CD4-positive, alpha-beta T cell (primary cell): ENCODE measurements at regions of chr3 and their contacts with region 1.

Region 1: DNA sequence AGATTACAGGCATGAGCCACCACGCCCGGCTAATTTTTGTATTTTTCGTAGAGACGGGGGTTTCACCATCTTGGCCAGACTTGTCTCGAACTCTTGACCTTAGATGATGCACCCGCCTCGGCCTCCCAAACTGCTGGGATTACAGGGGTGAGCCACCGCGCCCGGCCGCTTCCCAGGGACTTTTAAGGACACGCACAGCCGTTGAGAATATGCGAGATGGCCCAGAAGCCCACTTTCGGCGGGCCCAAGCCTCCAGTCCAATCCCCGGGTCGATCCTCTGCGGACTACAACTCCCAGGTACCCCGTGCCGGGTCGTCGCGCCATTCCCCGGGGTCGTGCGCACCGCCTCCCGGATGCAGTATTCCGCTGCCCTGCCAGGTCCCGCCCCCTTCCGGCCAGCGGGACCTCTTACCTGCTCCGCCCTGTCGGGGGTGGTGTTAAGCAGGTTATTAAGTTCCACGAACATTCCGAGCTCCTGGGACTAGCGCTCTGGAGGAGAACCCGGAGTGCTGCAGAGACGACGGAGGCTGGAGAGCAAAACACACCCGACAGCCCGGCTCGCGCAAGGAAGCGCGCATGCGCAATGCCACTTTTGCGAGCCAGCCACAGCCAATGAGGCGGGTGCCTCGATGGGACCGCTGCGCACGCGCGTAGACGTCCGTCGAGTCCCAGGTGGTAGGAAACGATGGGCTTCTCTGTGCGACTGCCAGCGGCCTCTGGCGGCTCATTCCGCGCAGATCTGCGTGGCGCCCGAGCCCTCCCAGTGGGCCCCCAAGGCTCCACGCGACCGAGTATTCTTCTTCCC is at the start of gene ELP6:
- DNase-seq: peak; percentile 92 to 99 (median 97)
- ATAC-seq: peak; percentile 93
- H3K4me3 ChIP-seq: peak within 1 kb of the TSS; percentile 96
- H3K4me3 Mint-ChIP-seq: peak within 1 kb of the TSS; percentile 99
- H3K27ac ChIP-seq: peak within 1 kb of the TSS; percentile 93 to 98
- H3K27ac Mint-ChIP-seq: peak within 1 kb of the TSS; percentile 89
- H3K4me1 ChIP-seq: peaks cover 22% of the 10 kb centered on the region
- H3K4me1 Mint-ChIP-seq: peaks cover 28% of the 10 kb centered on the region
- H3K27me3 ChIP-seq: no peaks in the 10 kb centered on the region
- H3K27me3 Mint-ChIP-seq: no peaks in the 10 kb centered on the region
- CTCF ChIP-seq: peak; percentile 68
- total RNA-seq, gene ELP6: 11.0 to 12.3 TPM

Region 2: GRCh38 chr3:47380601-47381316 is 132.6 kb before region 1 on chr3 and contains the start of gene PTPN23:
- CTCF ChIA-PET with region 1: no interaction called
- POLR2A ChIA-PET with region 1: interaction called, 6 read pairs
- intact Hi-C with region 1: loop called in 1 of 2 experiments (anchors 2 kb)
- DNase-seq: peak; percentile 97 to 99 (median 99)
- ATAC-seq: peak; percentile 84
- H3K4me3 ChIP-seq: peak within 1 kb of the TSS; percentile 97
- H3K4me3 Mint-ChIP-seq: peak within 1 kb of the TSS; percentile 95
- H3K27ac ChIP-seq: peak within 1 kb of the TSS; percentile 85 to 97
- H3K27ac Mint-ChIP-seq: peak within 1 kb of the TSS; percentile 91
- H3K4me1 ChIP-seq: peaks cover 28% of the 10 kb centered on the region
- H3K4me1 Mint-ChIP-seq: peaks cover 41% of the 10 kb centered on the region
- H3K27me3 ChIP-seq: no peaks in the 10 kb centered on the region
- H3K27me3 Mint-ChIP-seq: no peaks in the 10 kb centered on the region
- CTCF ChIP-seq: no peak
- total RNA-seq, gene PTPN23: 27.3 to 35.7 TPM

Region 3: DNA sequence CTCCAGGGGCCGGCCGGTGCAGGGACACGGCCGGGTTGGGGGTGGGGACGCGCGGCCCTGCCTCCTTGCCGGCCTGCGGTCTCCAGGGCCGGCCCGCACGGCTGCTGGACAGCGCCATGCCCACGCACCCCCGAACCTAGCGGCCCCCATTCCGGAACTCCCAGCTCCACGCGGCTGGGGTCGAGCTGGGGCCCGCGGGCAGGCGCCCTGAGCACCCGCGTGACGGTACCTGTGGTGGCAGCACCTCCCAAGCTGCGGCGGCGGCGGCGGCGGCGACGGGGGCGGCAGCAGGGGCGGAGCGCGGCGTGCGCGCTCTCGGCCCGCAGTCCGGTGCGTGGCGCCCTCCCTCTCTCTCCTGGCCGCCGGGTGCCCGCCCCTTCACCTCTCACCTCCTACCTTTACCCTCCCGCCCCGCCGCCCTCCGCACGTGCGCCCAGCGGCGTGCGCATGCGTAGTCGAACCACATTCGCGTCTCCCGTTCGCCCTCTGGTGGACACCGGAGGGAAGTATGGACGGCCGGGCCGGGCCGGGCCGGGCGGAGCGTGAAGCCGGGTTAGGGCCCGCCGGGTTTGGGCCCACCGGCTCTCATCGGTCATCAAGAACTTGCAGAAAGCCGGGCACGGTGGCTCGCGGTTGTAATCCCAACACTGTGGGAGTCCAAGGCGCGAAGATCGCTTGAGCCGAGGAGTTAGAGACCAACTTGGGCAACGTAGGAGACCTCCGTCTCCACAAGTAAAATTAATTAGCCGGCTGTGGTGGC is 37.6 kb before region 1 on chr3 and contains the start of gene SCAP:
- CTCF ChIA-PET with region 1: interaction called, 5 read pairs
- POLR2A ChIA-PET with region 1: interaction called, 3 read pairs
- intact Hi-C with region 1: loop called (anchors 1 to 5 kb)
- DNase-seq: peak; percentile 93 to 98 (median 96)
- ATAC-seq: peak; percentile 92
- H3K4me3 ChIP-seq: peak within 1 kb of the TSS; percentile 68
- H3K4me3 Mint-ChIP-seq: peak within 1 kb of the TSS; percentile 99
- H3K27ac ChIP-seq: peak within 1 kb of the TSS; percentile 73 to 74
- H3K27ac Mint-ChIP-seq: peak within 1 kb of the TSS; percentile 89
- H3K4me1 ChIP-seq: peaks cover 28% of the 10 kb centered on the region
- H3K4me1 Mint-ChIP-seq: peaks cover 44% of the 10 kb centered on the region
- H3K27me3 ChIP-seq: no peaks in the 10 kb centered on the region
- H3K27me3 Mint-ChIP-seq: no peaks in the 10 kb centered on the region
- CTCF ChIP-seq: peak; percentile 90
- total RNA-seq, gene SCAP: 58.3 to 60.3 TPM

Region 4: GRCh38 chr3:48088749-48089466 is 575.6 kb after region 1 on chr3:
- CTCF ChIA-PET with region 1: no interaction called
- POLR2A ChIA-PET with region 1: no interaction called
- intact Hi-C with region 1: loop called in 1 of 2 experiments (anchors 10 kb)
- DNase-seq: peak; percentile 83 to 97 (median 93)
- ATAC-seq: peak; percentile 90
- H3K4me3 ChIP-seq: peak overlapping the region; percentile 82
- H3K4me3 Mint-ChIP-seq: peak overlapping the region; percentile 97
- H3K27ac ChIP-seq: peak overlapping the region; percentile 80 to 81
- H3K27ac Mint-ChIP-seq: peak overlapping the region; percentile 95
- H3K4me1 ChIP-seq: peaks cover 19% of the 10 kb centered on the region
- H3K4me1 Mint-ChIP-seq: peaks cover 35% of the 10 kb centered on the region
- H3K27me3 ChIP-seq: no peaks in the 10 kb centered on the region
- H3K27me3 Mint-ChIP-seq: no peaks in the 10 kb centered on the region
- CTCF ChIP-seq: no peak

Region 5: DNA sequence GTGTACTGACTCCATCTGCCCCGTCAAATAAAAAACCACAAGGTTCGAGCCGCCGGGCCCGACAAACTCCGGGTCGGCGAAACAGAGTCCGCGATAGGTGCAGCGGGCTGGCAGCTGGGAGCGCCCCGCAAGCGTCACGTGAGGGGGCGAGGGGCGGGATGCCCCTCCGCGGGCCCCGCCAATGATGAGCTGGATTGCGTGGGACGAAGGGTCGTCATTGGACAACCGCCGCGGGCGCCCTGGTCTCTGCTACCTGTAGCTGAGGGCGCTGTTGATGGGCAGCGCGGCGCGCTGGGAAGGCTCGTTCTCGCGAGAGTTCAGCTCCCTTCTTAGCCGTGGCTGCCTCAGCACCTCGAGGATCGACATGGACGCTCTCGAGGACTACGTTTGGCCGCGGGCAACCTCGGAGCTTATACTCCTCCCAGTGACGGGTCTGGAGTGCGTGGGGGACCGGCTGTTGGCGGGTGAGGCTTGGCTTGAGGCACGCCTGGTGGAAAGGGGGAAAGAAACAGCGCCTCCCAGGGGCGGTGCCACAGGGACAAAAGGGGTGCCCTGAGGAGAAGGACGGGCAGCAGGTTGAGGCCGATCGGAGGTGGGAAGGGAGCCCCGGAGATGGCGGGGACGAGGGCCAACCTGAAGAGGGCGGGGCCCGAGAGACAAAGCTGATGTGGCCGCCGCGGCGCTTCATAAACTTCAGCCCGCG is 1493.9 kb after region 1 on chr3 and contains the start of gene WDR6:
- CTCF ChIA-PET with region 1: no interaction called
- POLR2A ChIA-PET with region 1: no interaction called
- intact Hi-C with region 1: loop called in 1 of 2 experiments (anchors 5 kb)
- DNase-seq: peak; percentile 93 to 99 (median 96)
- ATAC-seq: peak; percentile 86
- H3K4me3 ChIP-seq: peak within 1 kb of the TSS; percentile 99
- H3K4me3 Mint-ChIP-seq: peak within 1 kb of the TSS; percentile 99
- H3K27ac ChIP-seq: peak within 1 kb of the TSS; percentile 89 to 99
- H3K27ac Mint-ChIP-seq: peak within 1 kb of the TSS; percentile 97
- H3K4me1 ChIP-seq: peaks cover 25% of the 10 kb centered on the region
- H3K4me1 Mint-ChIP-seq: peaks cover 27% of the 10 kb centered on the region
- H3K27me3 ChIP-seq: no peaks in the 10 kb centered on the region
- H3K27me3 Mint-ChIP-seq: no peaks in the 10 kb centered on the region
- CTCF ChIP-seq: peak; percentile 19
- total RNA-seq, gene WDR6: 132 to 134 TPM